Tibial artery (tissue), 4 donors: ENCODE measurements at regions of chr9 and their contacts with region 1.

Region 1: DNA sequence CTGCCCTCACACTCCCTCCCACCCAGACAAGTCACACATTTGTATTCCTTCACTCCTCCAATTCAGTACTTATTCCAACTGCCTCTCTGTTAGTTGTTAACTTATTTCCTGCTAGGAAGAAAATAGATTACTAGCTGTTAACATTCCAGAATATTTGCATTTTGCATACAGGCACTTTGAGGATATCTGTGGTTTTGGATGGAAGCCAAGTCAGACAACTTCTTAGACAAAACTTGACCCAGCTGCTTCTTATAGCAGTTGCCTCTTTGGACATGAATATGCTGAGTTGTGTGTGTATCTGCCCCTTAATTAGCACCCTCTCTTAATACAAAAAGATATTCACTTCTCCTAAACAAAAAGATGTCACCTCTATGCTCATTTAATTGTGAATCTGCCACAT is 1280.6 kb upstream of the ACO1 start:
- DNase-seq: no peak
- H3K4me3 ChIP-seq: no peak overlapping the region
- H3K27ac ChIP-seq: no peak overlapping the region
- H3K4me1 ChIP-seq: no peaks in the 10 kb centered on the region
- H3K27me3 ChIP-seq: no peaks in the 10 kb centered on the region
- CTCF ChIP-seq: no peak

Region 2: GRCh38 chr9:31045789-31046188 is 58.0 kb before region 1 on chr9:
- intact Hi-C with region 1: loop called (anchors 10 kb)
- DNase-seq: no peak
- H3K4me3 ChIP-seq: no peak overlapping the region
- H3K27ac ChIP-seq: no peak overlapping the region
- H3K4me1 ChIP-seq: no peaks in the 10 kb centered on the region
- H3K27me3 ChIP-seq: no peaks in the 10 kb centered on the region
- CTCF ChIP-seq: no peak

Region 3: GRCh38 chr9:31210978-31211570 is 107.2 kb after region 1 on chr9:
- intact Hi-C with region 1: no loop called
- DNase-seq: no peak
- H3K4me3 ChIP-seq: no peak overlapping the region
- H3K27ac ChIP-seq: no peak overlapping the region
- H3K4me1 ChIP-seq: no peaks in the 10 kb centered on the region
- H3K27me3 ChIP-seq: no peaks in the 10 kb centered on the region
- CTCF ChIP-seq: no peak

Region 4: GRCh38 chr9:31248156-31248555 is 144.3 kb after region 1 on chr9:
- intact Hi-C with region 1: loop called (anchors 5 kb)
- DNase-seq: no peak
- H3K4me3 ChIP-seq: no peak overlapping the region
- H3K27ac ChIP-seq: no peak overlapping the region
- H3K4me1 ChIP-seq: no peaks in the 10 kb centered on the region
- H3K27me3 ChIP-seq: no peaks in the 10 kb centered on the region
- CTCF ChIP-seq: no peak